ENCODE measurements at regions of chr17 and their contacts with region 1.

Region 1: DNA sequence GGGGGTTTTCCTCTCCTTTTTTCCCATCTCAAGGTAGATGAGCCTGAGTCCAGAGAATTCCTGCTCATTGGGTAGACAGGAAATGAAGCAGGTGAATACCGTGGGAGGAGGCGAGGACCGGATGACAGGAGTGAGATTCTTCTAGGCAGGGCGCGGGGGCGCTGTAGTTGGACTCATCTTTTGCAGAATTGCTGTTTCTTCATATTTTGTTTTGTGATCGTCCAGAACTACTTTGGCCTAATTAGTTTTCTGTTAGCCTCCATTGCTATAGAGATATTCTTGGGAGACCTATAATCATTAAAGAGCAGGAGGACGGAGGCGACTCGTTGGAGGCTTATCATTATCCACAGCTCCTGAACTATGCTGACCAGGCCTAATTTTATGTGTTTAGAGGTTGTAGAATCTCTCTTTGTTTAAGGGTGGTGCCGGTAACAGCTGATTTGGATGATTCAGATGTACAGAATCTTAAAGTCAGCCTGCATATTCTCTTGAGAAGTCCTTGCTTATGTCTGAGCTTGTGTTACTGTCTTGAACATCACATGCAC is 650 bp downstream of the ATP6V0A1 start:
- DNase-seq: peak; percentile 93
- H3K4me3 ChIP-seq: peak overlapping the region; percentile 74 to 92 (median 75)
- H3K27ac ChIP-seq: peak overlapping the region; percentile 97 to 98 (median 98)
- H3K4me1 ChIP-seq: peaks cover 22 to 62% (median 59%) of the 10 kb centered on the region in 4 donors
- H3K27me3 ChIP-seq: no peaks in the 10 kb centered on the region
- CTCF ChIP-seq: peak; percentile 36 to 50 (median 50)
- EP300 ChIP-seq: no peak
- POLR2A ChIP-seq: no peak

Region 2: DNA sequence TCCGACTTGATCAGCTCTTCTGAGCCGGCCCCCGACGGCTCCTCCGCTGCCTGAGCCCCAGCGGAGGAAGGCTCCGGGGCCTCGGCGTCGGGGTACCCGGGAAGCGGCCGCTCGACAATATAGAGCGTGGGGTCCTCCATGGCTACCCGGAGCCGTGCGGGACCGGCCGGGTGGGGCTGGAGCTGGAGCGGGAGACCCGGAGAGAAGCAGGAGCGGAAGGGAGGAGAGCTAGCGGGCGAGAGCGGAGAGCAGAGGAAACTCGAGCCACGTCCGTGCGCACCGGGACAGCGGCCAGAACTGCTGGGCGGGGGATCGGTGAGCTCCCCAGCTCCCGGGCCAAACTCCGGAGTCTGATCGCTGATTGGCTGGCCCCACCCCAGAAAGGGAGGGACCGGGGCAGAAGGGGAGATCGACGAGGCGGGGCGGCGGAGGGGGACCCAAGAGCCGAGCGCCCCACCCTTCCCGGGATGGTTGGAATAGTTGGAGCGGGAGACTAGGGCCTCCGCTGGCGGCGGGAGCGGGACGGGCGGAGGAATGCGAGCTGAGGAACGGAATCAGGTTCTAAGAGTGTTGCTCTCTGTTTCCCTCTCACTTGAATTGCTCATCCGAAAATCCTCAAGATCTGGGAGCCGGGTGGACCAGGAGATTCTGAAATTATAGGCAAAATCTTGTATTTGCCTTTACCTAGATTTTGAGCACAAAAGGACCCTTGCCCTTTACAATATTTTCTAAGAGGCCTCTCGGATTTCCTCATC is 36.2 kb before region 1 on chr17 and contains the start of gene CAVIN1:
- intact Hi-C with region 1: loop called (anchors 5 kb)
- DNase-seq: peak; percentile 100
- H3K4me3 ChIP-seq: peak within 1 kb of the TSS; percentile 83 to 99 (median 96)
- H3K27ac ChIP-seq: peak within 1 kb of the TSS; percentile 97 to 100 (median 100)
- H3K4me1 ChIP-seq: peaks cover 43 to 61% (median 59%) of the 10 kb centered on the region in 4 donors
- H3K27me3 ChIP-seq: no peaks in the 10 kb centered on the region
- CTCF ChIP-seq: peak in 1 of 3 experiments; percentile 21
- EP300 ChIP-seq: no peak
- POLR2A ChIP-seq: peak; percentile 96
- total RNA-seq, gene CAVIN1: 619 to 1,181 (median 1,019) TPM

Measured in esophagus muscularis mucosa (tissue), 4 donors.